ENCODE measurements at regions of chr18 and their contacts with region 1.

Region 1: DNA sequence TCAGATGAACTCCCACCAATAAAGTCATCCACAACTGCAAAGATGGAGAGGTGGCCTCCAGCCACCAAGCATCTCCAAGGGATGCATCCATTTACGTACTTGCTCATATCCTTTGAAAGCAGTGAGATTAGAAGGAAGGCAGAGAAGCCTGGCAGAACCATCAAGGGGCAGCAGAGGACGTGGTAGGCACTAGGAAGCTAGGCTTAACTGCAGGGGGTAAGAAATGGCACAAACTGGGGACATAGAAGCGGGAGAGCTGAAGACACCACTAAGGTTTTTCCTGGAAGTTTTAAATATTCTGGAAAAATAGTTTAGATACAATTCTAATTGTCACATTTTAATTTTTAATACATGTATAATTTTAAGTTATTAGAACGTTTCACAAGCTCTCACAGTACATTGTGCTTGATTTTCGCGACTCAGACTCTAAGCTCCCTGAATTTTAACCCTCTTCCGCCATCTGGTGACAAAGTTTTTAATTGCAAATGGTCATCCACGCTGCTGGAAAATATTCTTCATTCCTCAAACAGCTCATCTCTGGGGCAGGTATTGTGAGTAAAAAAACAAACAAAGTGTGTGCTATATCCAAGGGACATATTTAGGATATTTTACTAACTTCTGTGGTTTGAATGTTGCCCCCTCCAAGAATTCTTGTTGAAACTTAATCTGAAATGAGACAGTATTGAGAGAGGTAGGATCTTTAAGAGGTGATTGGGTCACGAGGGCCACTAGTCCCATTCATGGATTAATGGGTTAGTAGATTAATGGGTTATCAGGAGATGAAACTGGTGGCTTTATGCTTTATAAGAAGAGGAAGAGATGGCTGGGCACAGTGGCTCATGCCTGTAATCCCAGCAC is 1.6 kb upstream of the PSTPIP2 start:
- DNase-seq: peak; percentile 75 to 84 (median 77)
- H3K4me3 ChIP-seq: peak overlapping the region in 2 of 7 experiments; percentile 1 to 31
- H3K27ac ChIP-seq: no peak overlapping the region
- H3K4me1 ChIP-seq: peaks cover 2 to 41% (median 33%) of the 10 kb centered on the region in 4 experiments
- H3K27me3 ChIP-seq: no peaks in the 10 kb centered on the region

Region 2: GRCh38 chr18:45920367-45920766 is 153.3 kb before region 1 on chr18:
- CTCF ChIA-PET with region 1: interaction called, 14 read pairs
- POLR2A ChIA-PET with region 1: no interaction called
- DNase-seq: peak in 2 of 3 donors; percentile 40 to 53
- H3K4me3 ChIP-seq: no peak overlapping the region
- H3K27ac ChIP-seq: no peak overlapping the region
- H3K4me1 ChIP-seq: peaks cover 0 to 6% (median 2%) of the 10 kb centered on the region in 4 experiments
- H3K27me3 ChIP-seq: no peaks in the 10 kb centered on the region

Region 3: DNA sequence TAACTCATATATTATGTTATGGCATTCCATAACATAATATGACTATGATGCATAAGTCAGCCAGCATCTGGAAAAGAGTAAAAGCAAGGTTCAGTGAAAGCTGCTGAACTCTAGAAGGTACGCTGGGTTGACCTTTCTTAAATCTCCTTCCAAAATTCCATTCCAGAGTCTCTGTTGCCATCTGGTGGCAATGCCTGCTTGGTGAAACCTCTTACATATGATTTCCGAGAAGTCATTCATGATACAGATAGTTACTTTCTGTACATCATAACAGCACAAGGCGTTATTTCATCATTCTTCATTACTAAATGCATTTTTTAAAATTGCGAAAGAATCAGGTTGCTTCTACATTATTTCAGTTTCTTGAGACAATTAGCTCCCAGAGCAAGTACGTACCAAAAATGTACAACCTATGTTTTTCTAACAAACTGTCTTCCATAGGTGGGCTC is 99.6 kb before region 1 on chr18:
- CTCF ChIA-PET with region 1: interaction called, 26 read pairs
- POLR2A ChIA-PET with region 1: no interaction called
- DNase-seq: peak; percentile 77 to 86 (median 83)
- H3K4me3 ChIP-seq: no peak overlapping the region
- H3K27ac ChIP-seq: no peak overlapping the region
- H3K4me1 ChIP-seq: peaks cover 0 to 4% (median 2%) of the 10 kb centered on the region in 4 experiments
- H3K27me3 ChIP-seq: no peaks in the 10 kb centered on the region

Region 4: DNA sequence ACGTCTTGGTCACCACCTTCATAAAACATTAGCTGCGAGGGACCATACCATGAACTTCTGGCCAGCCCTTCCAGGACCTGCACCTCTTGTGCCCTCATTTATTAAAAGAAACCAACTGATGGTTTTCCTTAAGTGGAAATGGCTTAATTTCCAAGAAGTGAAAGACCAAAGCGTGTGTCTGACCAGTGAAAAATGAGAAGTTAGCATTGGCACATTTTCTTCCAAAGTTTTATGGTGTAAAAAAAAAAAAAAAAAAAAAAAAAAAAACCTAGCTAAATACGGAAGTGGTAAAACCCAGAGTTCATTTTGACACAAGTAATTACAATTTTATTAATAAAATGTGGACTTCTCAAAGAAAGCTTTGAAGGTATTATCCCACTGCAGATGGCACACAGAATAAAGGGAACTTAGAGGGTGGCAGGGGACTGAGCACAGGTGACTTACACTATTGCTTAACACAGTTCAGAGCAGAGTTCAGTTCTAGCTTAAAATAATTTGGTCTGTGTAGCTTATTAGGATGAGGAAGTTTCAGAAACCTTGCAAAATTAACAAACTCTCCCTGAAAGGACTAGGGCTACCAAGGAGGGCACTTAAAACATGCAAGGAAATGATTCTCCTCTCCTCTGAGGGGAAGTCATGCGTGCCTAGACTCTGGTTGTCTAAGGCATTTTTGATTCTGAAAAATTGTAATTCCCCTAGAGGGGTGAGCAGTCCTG is 64.4 kb before region 1 on chr18:
- CTCF ChIA-PET with region 1: interaction called, 14 read pairs
- POLR2A ChIA-PET with region 1: no interaction called
- DNase-seq: peak; percentile 20 to 76 (median 68)
- H3K4me3 ChIP-seq: peak overlapping the region in 2 of 7 experiments; percentile 20 to 30
- H3K27ac ChIP-seq: no peak overlapping the region
- H3K4me1 ChIP-seq: peaks cover 13 to 41% (median 33%) of the 10 kb centered on the region in 4 experiments
- H3K27me3 ChIP-seq: no peaks in the 10 kb centered on the region

Region 5: GRCh38 chr18:46054956-46055837 is 18.5 kb before region 1 on chr18:
- CTCF ChIA-PET with region 1: interaction called, 14 read pairs
- POLR2A ChIA-PET with region 1: no interaction called
- DNase-seq: peak; percentile 39 to 83 (median 65)
- H3K4me3 ChIP-seq: peak overlapping the region in 3 of 7 experiments; percentile 37 to 60 (median 51)
- H3K27ac ChIP-seq: peak overlapping the region; percentile 55 to 80
- H3K4me1 ChIP-seq: peaks cover 5 to 32% (median 21%) of the 10 kb centered on the region in 4 experiments
- H3K27me3 ChIP-seq: no peaks in the 10 kb centered on the region

Region 6: GRCh38 chr18:46097801-46098615 is 24.3 kb after region 1 on chr18 and contains the start of gene ATP5F1A:
- CTCF ChIA-PET with region 1: interaction called, 13 read pairs
- POLR2A ChIA-PET with region 1: no interaction called
- DNase-seq: peak; percentile 87 to 92 (median 91)
- H3K4me3 ChIP-seq: peak within 1 kb of the TSS; percentile 75 to 99 (median 97)
- H3K27ac ChIP-seq: peak within 1 kb of the TSS; percentile 94 to 97
- H3K4me1 ChIP-seq: peaks cover 10 to 26% (median 15%) of the 10 kb centered on the region in 4 experiments
- H3K27me3 ChIP-seq: no peaks in the 10 kb centered on the region